Activated CD4-positive, alpha-beta memory T cell treated with anti-CD3 and anti-CD28 coated beads for 36 hours (primary cell): ENCODE measurements at regions of chr22 and their contacts with region 1.

Region 1: DNA sequence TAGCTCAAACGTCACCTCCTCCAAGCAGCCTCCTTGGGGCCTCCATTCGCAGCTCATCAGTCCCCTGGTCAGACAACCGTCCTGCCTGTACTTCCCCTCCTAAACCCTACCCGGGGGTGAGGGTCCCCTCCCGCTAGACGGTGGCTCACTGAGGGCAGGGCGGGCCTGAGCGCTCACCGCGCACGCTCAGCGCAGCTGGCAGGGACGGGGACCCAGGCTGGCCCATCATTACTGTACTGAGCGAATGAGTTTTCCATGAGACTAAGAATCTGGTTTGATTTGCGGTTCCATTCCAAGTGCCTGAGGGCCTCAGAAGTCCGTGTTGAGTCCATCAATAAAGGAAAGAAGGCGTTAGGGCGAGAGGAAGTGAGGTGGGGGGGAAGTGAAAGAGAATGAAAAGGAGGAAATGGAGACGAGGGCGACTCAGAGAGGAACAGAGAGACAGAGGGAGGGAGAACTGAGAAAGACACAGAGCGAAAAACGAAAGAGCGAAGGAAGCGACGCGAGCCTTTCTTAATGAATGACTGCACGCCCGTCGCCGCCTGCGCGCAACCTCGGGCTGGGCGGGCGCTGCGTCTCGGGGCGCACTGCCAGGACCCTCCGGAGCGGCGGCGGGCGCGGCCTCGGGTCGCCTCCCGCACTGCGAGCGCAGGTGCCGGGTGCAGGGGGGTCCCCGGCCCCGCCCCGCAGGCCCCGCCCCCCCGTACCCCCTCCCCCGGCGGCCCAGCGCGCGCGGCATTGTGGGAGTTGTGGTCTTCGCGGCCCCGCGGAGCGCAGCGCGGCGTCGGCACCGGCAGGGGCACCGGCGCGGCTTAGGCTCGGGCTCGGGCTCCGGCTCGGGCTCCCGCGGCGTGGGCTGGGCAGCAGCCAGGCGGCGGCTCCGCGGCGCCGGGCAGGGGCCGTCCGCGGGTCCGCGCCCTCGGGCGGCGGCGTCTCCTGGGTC is at the start of gene ASPHD2:
- DNase-seq: peak; percentile 84
- H3K4me3 Mint-ChIP-seq: peak within 1 kb of the TSS; percentile 92
- H3K27ac Mint-ChIP-seq: peak within 1 kb of the TSS; percentile 96
- H3K4me1 Mint-ChIP-seq: peaks cover 49% of the 10 kb centered on the region
- H3K27me3 Mint-ChIP-seq: no peaks in the 10 kb centered on the region
- total RNA-seq, gene ASPHD2: 9.2 to 10.0 TPM

Region 2: GRCh38 chr22:26364066-26365015 is 64.4 kb before region 1 on chr22:
- CTCF ChIA-PET with region 1: interaction called, 11 read pairs
- POLR2A ChIA-PET with region 1: no interaction called
- intact Hi-C with region 1: no loop called
- DNase-seq: peak; percentile 57
- H3K4me3 Mint-ChIP-seq: no peak overlapping the region
- H3K27ac Mint-ChIP-seq: no peak overlapping the region
- H3K4me1 Mint-ChIP-seq: peaks cover 3% of the 10 kb centered on the region
- H3K27me3 Mint-ChIP-seq: peaks cover 14% of the 10 kb centered on the region

Region 3: GRCh38 chr22:26398741-26399153 is 30.0 kb before region 1 on chr22:
- CTCF ChIA-PET with region 1: interaction called, 4 read pairs
- POLR2A ChIA-PET with region 1: no interaction called
- intact Hi-C with region 1: loop called (anchors 2 kb)
- DNase-seq: peak; percentile 77
- H3K4me3 Mint-ChIP-seq: no peak overlapping the region
- H3K27ac Mint-ChIP-seq: no peak overlapping the region
- H3K4me1 Mint-ChIP-seq: peaks cover 5% of the 10 kb centered on the region
- H3K27me3 Mint-ChIP-seq: no peaks in the 10 kb centered on the region

Region 4: DNA sequence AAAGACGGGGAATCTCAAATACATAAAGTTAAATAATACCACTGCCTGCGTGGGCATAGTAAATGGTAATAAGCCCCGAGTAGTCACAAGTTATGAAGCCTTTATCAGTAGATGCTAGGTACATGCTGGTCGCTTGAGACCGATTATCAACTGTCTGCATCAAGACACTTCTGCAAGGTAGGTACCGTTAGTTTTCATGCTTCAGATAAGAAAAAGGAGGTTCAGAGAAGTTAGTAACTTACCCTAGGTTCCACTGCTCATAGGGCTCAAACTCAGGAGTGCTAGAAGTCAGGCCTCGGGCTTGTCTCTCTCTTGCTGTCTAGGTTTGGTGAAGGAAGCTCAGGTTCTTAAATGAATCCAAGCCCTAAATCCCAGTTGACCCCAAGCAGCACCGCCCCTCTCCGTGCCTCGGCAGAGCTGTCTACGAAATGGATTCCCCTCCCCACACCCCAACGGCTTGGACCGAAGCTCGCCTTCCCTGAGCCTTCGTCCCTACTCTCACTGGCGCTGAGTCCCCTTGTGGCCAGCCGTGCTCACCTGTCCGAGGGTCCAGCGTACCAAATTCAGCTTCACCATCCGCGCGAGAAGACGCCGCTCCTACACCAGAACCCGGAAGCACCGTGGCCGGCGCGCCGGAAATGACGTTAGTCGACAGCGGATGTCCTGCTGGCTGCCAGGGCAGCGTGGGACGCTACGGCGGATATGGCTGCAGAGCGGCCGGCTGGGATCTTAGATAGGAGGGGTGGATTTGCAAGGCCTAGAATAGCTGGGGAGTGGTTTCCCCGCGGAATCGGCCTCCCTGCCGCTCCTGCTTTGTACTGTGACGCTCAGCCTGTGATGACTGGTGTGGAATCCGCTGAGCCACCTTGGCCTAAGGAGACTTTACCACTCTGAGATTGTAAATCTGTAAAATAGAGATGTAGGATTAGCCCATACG is 83.3 kb after region 1 on chr22 and contains the start of gene TFIP11:
- CTCF ChIA-PET with region 1: no interaction called
- POLR2A ChIA-PET with region 1: no interaction called
- intact Hi-C with region 1: loop called (anchors 1 kb)
- DNase-seq: peak; percentile 95
- H3K4me3 Mint-ChIP-seq: peak within 1 kb of the TSS; percentile 98
- H3K27ac Mint-ChIP-seq: peak within 1 kb of the TSS; percentile 88
- H3K4me1 Mint-ChIP-seq: peaks cover 37% of the 10 kb centered on the region
- H3K27me3 Mint-ChIP-seq: no peaks in the 10 kb centered on the region
- total RNA-seq, gene TFIP11: 41.1 to 43.0 TPM

Region 5: DNA sequence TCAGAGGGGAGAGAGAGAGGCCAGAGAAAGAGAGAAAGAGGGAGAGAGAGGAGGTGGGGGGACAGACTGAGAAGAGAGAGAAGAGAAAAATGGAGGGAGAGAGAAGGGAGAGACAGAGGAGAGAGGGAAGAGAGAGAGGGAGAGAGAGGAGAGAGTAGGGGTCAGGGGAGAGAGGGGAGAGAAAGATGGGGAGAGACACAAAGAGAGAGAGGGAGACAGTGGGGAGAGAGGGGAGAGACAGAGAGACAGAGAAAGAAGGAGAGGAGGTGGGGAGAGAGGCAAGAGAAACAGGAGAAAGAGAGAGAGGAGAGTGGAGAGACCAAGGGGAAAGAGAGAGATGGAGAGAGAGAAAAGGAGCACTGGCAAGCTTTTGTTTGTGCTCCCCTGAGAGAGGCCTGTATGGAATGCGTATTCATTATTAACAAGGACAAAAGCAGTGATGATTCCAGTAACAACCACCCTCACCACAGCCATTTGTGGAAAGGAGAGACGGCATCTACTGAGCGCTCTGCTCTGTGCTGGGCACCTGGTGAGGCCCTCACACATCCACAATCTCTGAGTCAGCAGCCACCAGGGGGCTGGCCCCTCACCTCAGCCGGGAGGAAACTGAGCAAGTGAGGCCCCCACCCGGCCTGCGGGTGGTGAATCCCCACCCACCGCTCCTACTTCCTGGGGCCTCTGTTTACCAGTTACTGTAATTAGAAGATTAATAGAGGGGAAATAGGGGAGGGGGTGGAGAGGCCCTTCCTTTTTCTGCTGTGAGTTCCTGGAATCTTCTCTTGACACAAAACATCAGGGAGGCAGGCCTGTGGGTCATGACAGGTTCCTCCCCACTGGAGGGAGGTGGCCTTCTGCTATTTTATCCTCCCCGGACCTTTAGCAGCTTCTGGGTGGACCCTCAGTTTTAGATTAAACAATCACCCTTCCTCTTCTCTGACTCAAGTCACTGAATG is 214.0 kb after region 1 on chr22:
- CTCF ChIA-PET with region 1: no interaction called
- POLR2A ChIA-PET with region 1: no interaction called
- intact Hi-C with region 1: loop called (anchors 2 kb)
- DNase-seq: peak; percentile 94
- H3K4me3 Mint-ChIP-seq: peak overlapping the region; percentile 67
- H3K27ac Mint-ChIP-seq: peak overlapping the region; percentile 97
- H3K4me1 Mint-ChIP-seq: peaks cover 77% of the 10 kb centered on the region
- H3K27me3 Mint-ChIP-seq: no peaks in the 10 kb centered on the region

Region 6: GRCh38 chr22:26672590-26673468 is 244.0 kb after region 1 on chr22:
- CTCF ChIA-PET with region 1: interaction called, 5 read pairs
- POLR2A ChIA-PET with region 1: interaction called, 19 read pairs
- intact Hi-C with region 1: loop called (anchors 1 kb)
- DNase-seq: peak; percentile 97
- H3K4me3 Mint-ChIP-seq: peak overlapping the region; percentile 94
- H3K27ac Mint-ChIP-seq: peak overlapping the region; percentile 100
- H3K4me1 Mint-ChIP-seq: peaks cover 67% of the 10 kb centered on the region
- H3K27me3 Mint-ChIP-seq: no peaks in the 10 kb centered on the region